ENCODE measurements at regions of chr14 and their contacts with region 1.

Region 1: GRCh38 chr14:22829661-22830442 is at the start of gene MRPL52:
- DNase-seq: peak; percentile 94
- ATAC-seq: peak; percentile 92
- H3K4me3 Mint-ChIP-seq: peak within 1 kb of the TSS; percentile 82
- H3K27ac Mint-ChIP-seq: peak within 1 kb of the TSS; percentile 98
- H3K4me1 Mint-ChIP-seq: peaks cover 26% of the 10 kb centered on the region
- H3K27me3 Mint-ChIP-seq: no peaks in the 10 kb centered on the region
- total RNA-seq, gene MRPL52: 115 to 136 TPM

Region 2: DNA sequence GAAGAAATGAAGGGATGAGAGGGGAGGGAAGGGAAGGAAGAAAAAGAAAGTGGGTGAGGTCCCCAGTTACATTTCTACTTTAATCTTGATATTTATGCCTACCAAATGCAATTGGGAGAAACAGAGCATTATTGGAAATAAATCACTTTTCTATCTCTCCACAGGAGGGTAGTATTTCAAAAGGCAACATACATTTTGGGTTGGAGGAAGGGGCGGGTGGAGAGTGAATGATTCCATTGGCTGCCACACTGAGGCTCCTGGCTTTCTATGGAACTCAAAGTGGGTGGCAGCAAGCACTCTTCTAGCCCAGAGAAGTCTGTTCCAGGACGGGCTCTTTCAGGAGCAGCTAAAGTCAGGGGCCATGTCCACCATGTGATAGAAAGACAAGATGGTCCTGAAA is 682.1 kb before region 1 on chr14:
- CTCF ChIA-PET with region 1: no interaction called
- POLR2A ChIA-PET with region 1: no interaction called
- intact Hi-C with region 1: no loop called
- DNase-seq: peak; percentile 21
- ATAC-seq: peak; percentile 56
- H3K4me3 Mint-ChIP-seq: peak overlapping the region; percentile 71
- H3K27ac Mint-ChIP-seq: peak overlapping the region; percentile 83
- H3K4me1 Mint-ChIP-seq: peaks cover 5% of the 10 kb centered on the region
- H3K27me3 Mint-ChIP-seq: no peaks in the 10 kb centered on the region

Region 3: DNA sequence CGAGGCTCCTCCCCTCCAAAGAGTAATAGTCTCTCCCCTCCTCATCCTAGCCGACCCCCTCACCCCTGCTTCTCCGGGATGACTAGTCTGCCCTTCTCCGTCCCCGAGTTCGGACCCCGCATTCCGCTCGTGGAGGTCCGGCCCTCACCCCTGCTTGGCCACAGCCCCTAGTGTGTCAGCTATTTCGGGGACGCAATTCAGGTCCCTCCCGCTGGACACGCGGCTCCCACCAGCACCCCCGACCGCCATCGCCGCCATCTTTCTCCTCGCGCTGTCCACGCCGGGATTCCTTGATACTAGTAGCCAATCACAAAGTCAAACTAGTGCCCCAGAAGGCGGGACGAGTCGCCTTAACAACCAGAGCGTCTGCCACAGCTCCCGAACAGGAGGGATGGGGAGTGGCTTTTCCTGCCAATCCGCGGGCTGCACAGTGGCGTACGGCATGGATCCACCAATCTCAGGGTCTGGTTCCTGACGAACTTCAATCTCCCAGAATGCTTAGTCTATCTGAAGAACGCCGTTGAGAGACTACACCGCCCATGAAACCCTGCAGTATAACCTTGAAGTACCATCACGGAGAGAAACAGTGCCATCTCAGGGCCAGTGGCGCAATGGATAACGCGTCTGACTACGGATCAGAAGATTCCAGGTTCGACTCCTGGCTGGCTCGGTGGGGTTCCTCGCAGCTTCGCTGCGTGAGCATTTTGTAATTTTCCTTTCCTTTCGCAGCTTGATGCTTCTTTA is 99.4 kb after region 1 on chr14 and contains the start of gene PRMT5:
- CTCF ChIA-PET with region 1: interaction called, 3 read pairs
- POLR2A ChIA-PET with region 1: interaction called, 3 read pairs
- intact Hi-C with region 1: loop called in 1 of 2 experiments (anchors 1 kb)
- DNase-seq: peak; percentile 99
- ATAC-seq: peak; percentile 98
- H3K4me3 Mint-ChIP-seq: no peak within 1 kb of the TSS
- H3K27ac Mint-ChIP-seq: no peak within 1 kb of the TSS
- H3K4me1 Mint-ChIP-seq: peaks cover 39% of the 10 kb centered on the region
- H3K27me3 Mint-ChIP-seq: no peaks in the 10 kb centered on the region
- total RNA-seq, gene PRMT5: 121 to 151 TPM

Measured in activated CD4-positive, alpha-beta T cell treated with anti-CD3 and anti-CD28 coated beads for 36 hours (primary cell).